HCT116 (cell line): ENCODE measurements at regions of chr2 and their contacts with region 1.

Region 1: DNA sequence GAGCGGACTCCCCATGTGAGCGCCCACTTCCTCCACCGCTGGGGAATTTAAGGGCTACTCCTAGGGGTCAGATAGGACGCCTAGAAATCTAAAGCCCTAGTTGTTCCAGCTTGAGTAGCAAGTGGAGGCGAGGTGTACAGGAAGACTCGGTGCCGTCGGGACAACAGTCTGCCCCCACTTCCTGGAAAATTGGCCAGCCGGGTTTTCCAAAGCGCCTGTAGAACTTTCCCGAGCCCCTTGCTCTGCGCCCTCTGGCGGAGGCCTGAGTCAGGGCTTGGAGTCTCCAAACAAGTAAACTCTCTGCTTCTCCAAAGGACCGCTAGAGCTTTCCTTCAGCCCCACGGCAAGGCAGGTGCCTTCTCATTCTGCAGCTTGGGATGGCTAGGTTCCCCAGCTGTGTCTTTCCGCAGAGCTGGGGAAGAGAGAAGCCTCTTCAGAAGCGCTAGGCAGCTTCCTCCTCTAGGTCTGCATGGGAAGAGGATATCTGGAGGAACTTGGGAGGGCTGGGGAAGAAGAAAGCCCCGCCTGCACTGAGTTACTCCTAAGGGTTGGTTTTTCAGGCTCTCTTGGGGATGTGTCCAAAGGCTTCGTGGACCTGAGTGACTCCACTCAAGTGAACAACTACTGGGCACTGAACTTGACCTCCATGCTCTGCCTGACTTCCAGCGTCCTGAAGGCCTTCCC is 688 bp downstream of the SPR start:
- DNase-seq: peak; percentile 81
- ATAC-seq: peak; percentile 73
- H3K4me3 ChIP-seq: peak overlapping the region; percentile 67 to 69
- H3K27ac ChIP-seq: peak overlapping the region; percentile 99
- H3K4me1 ChIP-seq: peaks cover 11 to 23% of the 10 kb centered on the region in 2 experiments
- H3K27me3 ChIP-seq: no peaks in the 10 kb centered on the region
- CTCF ChIP-seq: peak; percentile 88 to 99 (median 90)
- POLR2A ChIP-seq: no peak
- RAD21 ChIP-seq: peak; percentile 59

Region 2: DNA sequence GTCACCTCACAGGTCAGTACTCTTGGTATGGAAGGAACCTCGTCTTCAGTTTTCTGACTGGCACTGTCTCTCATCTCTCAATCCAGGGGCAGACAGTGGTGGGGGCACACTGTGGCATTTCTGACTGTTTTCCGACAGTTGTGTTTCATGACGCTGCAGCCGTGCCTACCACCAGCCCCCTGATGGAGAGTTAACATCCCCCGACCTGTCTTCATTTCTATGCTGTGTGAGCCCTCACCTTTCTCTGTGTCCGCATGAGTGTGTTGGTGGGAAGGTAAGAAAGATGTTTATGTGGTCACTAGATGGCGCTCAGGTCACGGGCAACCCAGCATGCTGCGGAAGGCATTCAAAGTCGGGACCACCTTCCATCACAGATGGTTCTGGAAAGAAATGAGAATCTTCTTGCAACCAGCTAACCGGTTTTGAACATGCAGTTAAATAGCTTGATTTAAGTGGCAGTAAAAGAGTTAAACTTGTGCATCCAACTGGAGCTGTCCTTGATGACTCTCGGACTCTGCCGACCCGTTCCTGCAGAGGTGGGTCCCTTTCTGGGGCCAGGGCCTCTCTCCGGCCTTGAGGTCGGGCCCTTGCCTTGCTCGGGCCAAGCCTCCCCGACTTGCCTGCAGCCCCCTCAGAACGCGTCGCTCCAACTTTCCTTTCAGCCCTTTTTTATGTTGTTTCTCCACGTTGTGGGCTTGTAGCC is 1342.2 kb before region 1 on chr2:
- CTCF ChIA-PET with region 1: interaction called, 3 read pairs
- POLR2A ChIA-PET with region 1: no interaction called
- RAD21 ChIA-PET with region 1: no interaction called
- intact Hi-C with region 1: loop called (anchors 5 kb)
- DNase-seq: peak; percentile 57
- ATAC-seq: peak; percentile 89
- H3K4me3 ChIP-seq: peak overlapping the region; percentile 37 to 53
- H3K27ac ChIP-seq: peak overlapping the region; percentile 4; the same call in 1 of the 2 replicates
- H3K4me1 ChIP-seq: peaks cover 2 to 15% of the 10 kb centered on the region in 2 experiments; a peak in 3 of 4 replicates
- H3K27me3 ChIP-seq: no peaks in the 10 kb centered on the region
- CTCF ChIP-seq: peak; percentile 72 to 87 (median 84)
- POLR2A ChIP-seq: no peak
- RAD21 ChIP-seq: peak; percentile 92

Region 3: DNA sequence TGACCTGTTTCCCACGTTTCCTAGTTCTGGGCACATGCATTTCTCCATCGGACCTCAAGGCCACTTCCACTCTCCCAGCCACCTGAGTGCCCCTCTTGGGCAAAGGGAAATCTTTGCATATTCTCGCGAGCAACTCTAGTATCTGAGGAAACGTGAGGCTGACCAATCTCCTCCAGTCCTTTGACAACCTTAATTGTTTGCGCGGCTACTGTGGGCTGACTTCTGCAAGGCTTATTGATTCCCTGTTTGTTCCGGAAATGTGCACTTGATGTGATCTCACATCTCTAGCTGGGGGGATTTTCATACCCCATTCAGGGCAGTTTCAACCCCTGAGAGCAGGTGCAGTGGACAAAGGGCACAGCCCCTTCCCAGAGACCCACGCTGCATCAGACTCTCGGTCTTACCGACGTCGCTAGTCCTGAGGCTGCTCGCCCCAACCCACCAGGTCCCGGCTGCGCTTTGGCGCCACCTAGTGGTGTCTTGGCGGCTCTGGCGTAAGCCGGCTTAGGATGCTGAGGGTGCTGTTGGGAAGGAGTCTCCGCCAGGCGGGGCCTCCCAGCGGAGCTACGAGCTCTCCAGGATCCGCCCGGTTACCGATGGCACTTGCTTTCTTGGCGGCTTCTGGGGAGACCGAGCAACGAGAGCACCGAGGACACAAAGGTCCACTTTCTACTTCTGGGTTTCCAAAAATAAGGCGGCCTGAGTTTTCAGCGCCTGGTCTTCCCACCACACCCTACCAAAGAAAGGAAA is 25.5 kb before region 1 on chr2:
- CTCF ChIA-PET with region 1: interaction called, 23 read pairs
- POLR2A ChIA-PET with region 1: no interaction called
- RAD21 ChIA-PET with region 1: interaction called in 1 of 2 experiments, 3 read pairs
- intact Hi-C with region 1: no loop called
- DNase-seq: peak; percentile 86
- ATAC-seq: peak; percentile 95
- H3K4me3 ChIP-seq: peak overlapping the region; percentile 33 to 51
- H3K27ac ChIP-seq: no peak overlapping the region
- H3K4me1 ChIP-seq: peaks cover 4 to 22% of the 10 kb centered on the region in 2 experiments; a peak in 3 of 4 replicates
- H3K27me3 ChIP-seq: no peaks in the 10 kb centered on the region
- CTCF ChIP-seq: peak; percentile 97 to 99 (median 98)
- POLR2A ChIP-seq: no peak
- RAD21 ChIP-seq: peak; percentile 79

Region 4: GRCh38 chr2:72934683-72935610 is 47.1 kb after region 1 on chr2:
- CTCF ChIA-PET with region 1: interaction called, 22 read pairs
- POLR2A ChIA-PET with region 1: no interaction called
- RAD21 ChIA-PET with region 1: interaction called in 1 of 2 experiments, 11 read pairs
- intact Hi-C with region 1: loop called (anchors 1 kb)
- DNase-seq: peak; percentile 23
- ATAC-seq: peak; percentile 85
- H3K4me3 ChIP-seq: no peak overlapping the region
- H3K27ac ChIP-seq: no peak overlapping the region
- H3K4me1 ChIP-seq: peaks cover 2 to 23% of the 10 kb centered on the region in 2 experiments; a peak in 2 of 4 replicates
- H3K27me3 ChIP-seq: no peaks in the 10 kb centered on the region
- CTCF ChIP-seq: peak; percentile 66 to 77 (median 66)
- POLR2A ChIP-seq: no peak
- RAD21 ChIP-seq: peak; percentile 84

Region 5: DNA sequence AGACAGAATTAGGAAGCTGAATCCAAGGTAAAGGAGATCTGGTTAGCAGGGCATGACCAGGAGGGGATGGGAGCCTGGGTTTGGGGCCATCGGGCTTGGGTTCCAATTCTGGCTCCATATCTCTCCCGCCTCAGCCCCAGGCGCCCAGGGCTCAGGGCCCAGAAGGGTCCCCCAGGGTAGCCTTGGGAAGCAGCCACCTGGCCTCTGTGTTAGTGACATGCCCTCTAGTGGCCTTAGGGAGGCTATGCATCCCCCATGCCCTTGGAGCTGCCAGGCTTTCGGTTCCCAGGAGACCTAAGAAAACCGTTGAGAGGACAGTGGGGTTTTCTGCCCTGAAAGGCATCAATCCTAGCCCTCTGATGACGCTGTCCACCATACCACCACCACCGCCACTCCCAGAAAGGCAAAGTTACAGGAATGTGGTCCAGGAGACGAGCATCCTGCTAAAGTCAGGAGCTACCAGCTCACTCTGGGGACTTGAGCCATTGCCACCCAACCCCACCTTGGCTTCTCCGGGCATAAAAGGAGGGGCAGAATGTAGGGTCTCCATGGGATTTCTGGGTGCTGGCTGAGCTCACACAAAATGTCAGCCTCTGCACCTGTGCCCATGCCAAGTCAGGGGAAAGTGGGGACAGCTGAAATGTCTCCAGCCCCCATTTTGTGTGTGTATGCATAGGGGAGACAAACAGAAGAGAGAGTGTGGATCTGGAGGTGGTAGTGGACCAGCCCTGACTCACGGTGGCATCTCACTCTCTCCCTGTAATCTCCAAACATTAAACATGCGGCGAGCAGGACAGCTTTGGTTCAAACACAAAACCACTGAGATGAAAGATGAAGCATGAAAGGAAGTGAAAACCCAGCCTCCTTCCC is 85.9 kb after region 1 on chr2:
- CTCF ChIA-PET with region 1: interaction called, 28 read pairs
- POLR2A ChIA-PET with region 1: no interaction called
- RAD21 ChIA-PET with region 1: interaction called, 9 to 11 read pairs
- intact Hi-C with region 1: loop called (anchors 1 kb)
- DNase-seq: peak; percentile 36
- ATAC-seq: peak; percentile 98
- H3K4me3 ChIP-seq: no peak overlapping the region
- H3K27ac ChIP-seq: no peak overlapping the region
- H3K4me1 ChIP-seq: no peaks in the 10 kb centered on the region
- H3K27me3 ChIP-seq: no peaks in the 10 kb centered on the region
- CTCF ChIP-seq: peak; percentile 70 to 96 (median 83); a peak in 5 of 6 replicates
- POLR2A ChIP-seq: no peak
- RAD21 ChIP-seq: peak; percentile 72

Region 6: GRCh38 chr2:73156539-73157124 is 268.7 kb after region 1 on chr2:
- CTCF ChIA-PET with region 1: interaction called, 16 read pairs
- POLR2A ChIA-PET with region 1: no interaction called
- RAD21 ChIA-PET with region 1: interaction called, 3 to 5 read pairs
- intact Hi-C with region 1: no loop called
- DNase-seq: peak; percentile 31
- ATAC-seq: peak; percentile 98
- H3K4me3 ChIP-seq: no peak overlapping the region
- H3K27ac ChIP-seq: no peak overlapping the region
- H3K4me1 ChIP-seq: peaks cover 0 to 5% of the 10 kb centered on the region in 2 experiments; a peak in 1 of 4 replicates
- H3K27me3 ChIP-seq: no peaks in the 10 kb centered on the region
- CTCF ChIP-seq: peak; percentile 80 to 98 (median 83)
- POLR2A ChIP-seq: no peak
- RAD21 ChIP-seq: peak; percentile 99

Region 7: DNA sequence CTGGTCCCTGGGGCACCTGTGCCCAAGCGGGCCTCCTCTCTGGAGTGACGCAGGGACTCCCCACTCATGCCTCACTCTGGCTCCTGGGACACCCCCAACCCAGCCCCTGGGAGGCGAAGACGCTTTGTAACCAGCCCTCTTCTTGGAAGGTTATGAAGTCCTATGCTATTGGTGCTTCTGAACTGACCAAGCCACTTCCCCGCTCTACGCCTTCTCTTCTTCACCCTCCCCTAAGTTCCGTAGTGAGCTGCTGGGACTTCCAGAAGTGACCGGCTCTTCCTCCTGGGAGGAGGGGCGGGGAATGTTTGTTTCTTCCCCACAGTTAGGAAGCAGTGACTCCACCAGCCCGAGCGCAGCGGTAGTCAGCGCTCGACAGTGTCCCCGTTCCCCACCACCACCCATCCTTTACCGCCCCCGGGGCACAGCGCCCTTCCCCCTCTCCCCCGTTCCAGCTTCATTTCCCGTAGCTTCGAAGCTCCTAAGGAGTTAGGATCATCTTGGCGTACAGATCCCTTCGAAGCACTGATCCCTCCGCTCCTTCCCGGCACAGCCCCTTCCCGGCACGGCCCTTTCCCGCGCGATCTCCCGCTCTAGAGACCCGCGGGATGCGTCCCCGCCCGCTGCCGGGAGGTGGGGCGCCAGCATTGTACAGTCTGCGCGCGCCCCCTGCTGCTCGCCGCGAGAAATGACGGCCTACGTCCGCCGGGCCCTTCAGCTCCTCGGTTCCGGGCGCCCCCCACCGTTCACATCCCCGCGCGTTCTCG is 289.2 kb after region 1 on chr2:
- CTCF ChIA-PET with region 1: interaction called, 23 read pairs
- POLR2A ChIA-PET with region 1: no interaction called
- RAD21 ChIA-PET with region 1: interaction called in 1 of 2 experiments, 4 read pairs
- intact Hi-C with region 1: loop called (anchors 5 kb)
- DNase-seq: peak; percentile 57
- ATAC-seq: peak; percentile 96
- H3K4me3 ChIP-seq: peak overlapping the region; percentile 27 to 45
- H3K27ac ChIP-seq: no peak overlapping the region; the same call in 1 of the 2 replicates
- H3K4me1 ChIP-seq: peaks cover 9 to 14% of the 10 kb centered on the region in 2 experiments; a peak in 3 of 4 replicates
- H3K27me3 ChIP-seq: no peaks in the 10 kb centered on the region
- CTCF ChIP-seq: peak; percentile 87 to 99 (median 95)
- POLR2A ChIP-seq: no peak
- RAD21 ChIP-seq: peak; percentile 97